ENCODE measurements at regions of chr9 and their contacts with region 1.

Region 1: GRCh38 chr9:98575379-98576346 is 133.1 kb downstream of the GABBR2 start:
- DNase-seq: peak; percentile 89 to 95 (median 92)
- ATAC-seq: peak; percentile 92
- H3K4me3 ChIP-seq: no peak overlapping the region
- H3K27ac ChIP-seq: peak overlapping the region; percentile 88
- H3K4me1 ChIP-seq: peaks cover 14 to 21% of the 10 kb centered on the region in 2 experiments
- H3K27me3 ChIP-seq: no peaks in the 10 kb centered on the region; a peak in 1 of 5 replicates
- CTCF ChIP-seq: no peak
- EP300 ChIP-seq: peak; percentile 72
- POLR2A ChIP-seq: no peak; the same call in 1 of the 2 replicates
- RAD21 ChIP-seq: 0 out of 4 replicates have a peak, but pooled peaks of 1 of the 2 experiments have one; percentile 8

Region 2: GRCh38 chr9:98563212-98563907 is 12.3 kb before region 1 on chr9:
- CTCF ChIA-PET with region 1: no interaction called
- POLR2A ChIA-PET with region 1: interaction called, 11 read pairs
- in situ Hi-C with region 1: no loop called
- intact Hi-C with region 1: no loop called
- DNase-seq: no peak
- ATAC-seq: no peak
- H3K4me3 ChIP-seq: no peak overlapping the region
- H3K27ac ChIP-seq: no peak overlapping the region
- H3K4me1 ChIP-seq: peaks cover 0 to 2% of the 10 kb centered on the region in 2 experiments; a peak in 1 of 5 replicates
- H3K27me3 ChIP-seq: no peaks in the 10 kb centered on the region
- CTCF ChIP-seq: no peak
- EP300 ChIP-seq: no peak
- POLR2A ChIP-seq: no peak
- RAD21 ChIP-seq: no peak

Region 3: DNA sequence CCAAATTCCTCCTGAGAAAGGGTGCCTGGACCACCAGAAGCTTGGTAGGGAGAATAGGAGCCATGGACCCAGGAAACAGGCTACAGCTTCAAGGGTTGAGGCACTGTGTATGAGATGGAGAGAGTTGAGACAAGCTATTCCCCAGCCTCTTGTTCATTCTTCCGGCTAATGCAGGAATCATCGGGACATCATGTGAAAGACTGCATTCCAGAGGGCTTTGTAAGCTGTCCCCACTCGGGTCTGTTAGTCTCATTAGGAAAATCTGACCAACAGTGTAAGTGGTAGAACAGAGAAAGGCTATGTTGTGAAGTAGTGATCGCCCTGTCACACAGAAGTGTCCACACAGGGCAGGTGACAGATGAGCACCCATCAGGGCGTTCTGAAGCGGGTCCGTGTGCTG is 51.6 kb after region 1 on chr9:
- CTCF ChIA-PET with region 1: no interaction called
- POLR2A ChIA-PET with region 1: no interaction called
- in situ Hi-C with region 1: no loop called
- intact Hi-C with region 1: no loop called
- DNase-seq: no peak
- ATAC-seq: no peak; the same call in 2 of the 3 replicates
- H3K4me3 ChIP-seq: no peak overlapping the region
- H3K27ac ChIP-seq: no peak overlapping the region
- H3K4me1 ChIP-seq: no peaks in the 10 kb centered on the region; a peak in 1 of 5 replicates
- H3K27me3 ChIP-seq: peaks cover 24 to 47% of the 10 kb centered on the region in 2 experiments; a peak in 4 of 5 replicates
- CTCF ChIP-seq: no peak
- EP300 ChIP-seq: no peak
- POLR2A ChIP-seq: no peak
- RAD21 ChIP-seq: no peak

Region 4: DNA sequence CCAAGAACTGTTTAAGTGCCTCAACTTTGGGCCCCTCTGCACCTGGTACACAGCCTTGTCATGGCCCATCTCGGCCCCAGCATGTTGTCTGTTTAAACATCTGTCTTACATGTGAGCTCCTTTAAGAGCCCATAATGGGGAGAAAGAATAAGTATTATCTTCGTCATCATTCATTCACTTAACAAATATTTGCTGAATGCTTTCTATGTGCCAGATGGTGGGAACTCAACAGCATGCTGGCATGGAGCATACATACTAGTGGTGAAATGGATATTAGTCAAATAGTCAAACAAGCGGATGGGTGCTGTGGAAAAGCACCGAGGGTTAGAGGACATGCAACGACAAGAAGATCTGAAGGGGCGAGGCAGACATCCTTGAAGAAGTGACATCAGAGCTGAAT is 78.6 kb after region 1 on chr9:
- CTCF ChIA-PET with region 1: no interaction called
- POLR2A ChIA-PET with region 1: no interaction called
- in situ Hi-C with region 1: no loop called
- intact Hi-C with region 1: no loop called
- DNase-seq: no peak
- ATAC-seq: no peak
- H3K4me3 ChIP-seq: no peak overlapping the region
- H3K27ac ChIP-seq: no peak overlapping the region
- H3K4me1 ChIP-seq: no peaks in the 10 kb centered on the region
- H3K27me3 ChIP-seq: peaks cover 18 to 26% of the 10 kb centered on the region in 2 experiments
- CTCF ChIP-seq: no peak
- EP300 ChIP-seq: no peak
- POLR2A ChIP-seq: no peak
- RAD21 ChIP-seq: no peak

Measured in K562 (cell line).